AG04450 (cell line): ENCODE measurements at regions of chr4 and their contacts with region 1.

Region 1: GRCh38 chr4:167652267-167652666 is 418.0 kb upstream of the SPOCK3 start:
- DNase-seq: no peak
- H3K4me3 ChIP-seq: no peak overlapping the region
- H3K27ac ChIP-seq: no peak overlapping the region
- H3K27me3 ChIP-seq: no peaks in the 10 kb centered on the region
- CTCF ChIP-seq: no peak

Region 2: DNA sequence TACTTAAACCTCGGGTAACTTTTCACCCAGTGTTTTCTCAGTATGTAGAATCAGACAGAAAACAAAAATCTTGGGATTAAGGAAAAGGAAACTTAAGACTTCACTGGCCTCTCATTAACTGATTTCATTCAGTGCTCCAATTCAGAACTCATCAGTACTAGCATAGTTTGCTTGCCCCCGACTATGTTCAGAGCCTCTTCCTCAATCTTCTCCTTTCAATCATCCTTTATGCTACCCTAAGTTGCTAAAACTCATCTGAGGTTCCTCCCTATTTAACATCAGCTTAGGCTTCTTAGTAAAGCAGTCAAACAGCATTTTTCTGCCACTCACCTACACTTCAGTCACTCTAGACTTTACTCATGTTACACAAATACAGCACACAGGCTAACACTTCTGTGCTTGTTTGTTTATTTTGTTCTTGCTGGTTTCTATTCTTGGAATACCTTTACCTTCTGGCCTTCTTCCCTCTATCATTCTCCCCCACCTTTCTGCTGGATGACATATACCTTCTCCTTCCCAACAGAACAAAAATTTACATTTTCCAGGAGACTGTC is 1942.2 kb before region 1 on chr4:
- CTCF ChIA-PET with region 1: interaction called, 12 read pairs
- POLR2A ChIA-PET with region 1: no interaction called
- DNase-seq: no peak
- H3K4me3 ChIP-seq: no peak overlapping the region
- H3K27ac ChIP-seq: no peak overlapping the region
- H3K27me3 ChIP-seq: no peaks in the 10 kb centered on the region
- CTCF ChIP-seq: no peak

Region 3: DNA sequence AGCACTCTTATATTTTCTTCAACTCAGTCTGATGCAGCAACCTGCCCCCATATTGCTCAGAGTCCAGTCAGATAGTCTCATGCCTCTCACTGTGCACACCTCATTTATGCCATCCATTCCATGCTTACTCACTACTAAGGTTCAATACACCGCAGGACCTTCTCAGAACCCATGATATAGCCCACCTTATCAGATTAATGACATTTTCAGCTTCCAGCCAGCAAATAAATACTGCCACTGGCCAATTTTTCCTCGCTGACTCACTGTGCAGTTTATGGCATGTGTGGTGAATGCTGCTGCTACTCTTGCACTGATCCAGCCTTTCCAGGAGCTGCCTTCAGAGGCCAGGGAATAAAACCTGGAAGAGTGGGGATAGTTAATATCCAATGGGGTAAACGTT is 37.4 kb before region 1 on chr4:
- CTCF ChIA-PET with region 1: no interaction called
- POLR2A ChIA-PET with region 1: no interaction called
- DNase-seq: no peak
- H3K4me3 ChIP-seq: no peak overlapping the region
- H3K27ac ChIP-seq: no peak overlapping the region
- H3K27me3 ChIP-seq: no peaks in the 10 kb centered on the region
- CTCF ChIP-seq: no peak

Region 4: DNA sequence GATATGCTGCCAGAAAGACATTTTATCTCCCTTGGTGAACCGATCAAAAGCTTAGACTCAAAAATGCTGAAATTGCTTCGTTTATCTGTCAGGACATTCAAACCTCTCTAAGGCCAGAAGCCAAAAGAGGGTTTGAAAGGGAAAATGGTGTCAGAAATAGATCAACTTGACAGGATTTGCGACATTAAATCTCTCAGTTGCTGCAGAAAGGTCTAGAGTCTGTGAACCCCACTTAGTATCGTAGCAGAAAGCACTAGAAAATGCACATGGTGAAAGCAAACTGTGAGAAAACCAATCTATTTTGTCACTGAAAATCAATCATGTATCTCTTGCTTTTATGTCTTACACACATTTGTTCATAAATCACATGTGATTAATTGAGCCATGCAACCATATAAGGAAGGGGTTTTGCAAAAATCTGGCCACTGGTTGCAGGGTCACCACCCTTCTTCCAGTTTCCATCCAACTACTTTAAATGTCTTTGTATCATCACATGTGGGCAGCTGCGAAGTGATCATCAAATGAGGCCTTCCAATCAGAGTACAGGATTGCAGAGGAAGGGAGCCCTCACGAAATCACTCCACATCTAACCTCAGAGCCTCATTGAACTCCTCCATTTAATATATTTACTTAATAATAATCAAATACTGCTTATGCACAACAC is 92.9 kb after region 1 on chr4:
- CTCF ChIA-PET with region 1: no interaction called
- POLR2A ChIA-PET with region 1: no interaction called
- DNase-seq: no peak
- H3K4me3 ChIP-seq: no peak overlapping the region
- H3K27ac ChIP-seq: no peak overlapping the region
- H3K27me3 ChIP-seq: no peaks in the 10 kb centered on the region
- CTCF ChIP-seq: no peak